MCF 10A (cell line): ENCODE measurements at regions of chr9 and their contacts with region 1.

Region 1: DNA sequence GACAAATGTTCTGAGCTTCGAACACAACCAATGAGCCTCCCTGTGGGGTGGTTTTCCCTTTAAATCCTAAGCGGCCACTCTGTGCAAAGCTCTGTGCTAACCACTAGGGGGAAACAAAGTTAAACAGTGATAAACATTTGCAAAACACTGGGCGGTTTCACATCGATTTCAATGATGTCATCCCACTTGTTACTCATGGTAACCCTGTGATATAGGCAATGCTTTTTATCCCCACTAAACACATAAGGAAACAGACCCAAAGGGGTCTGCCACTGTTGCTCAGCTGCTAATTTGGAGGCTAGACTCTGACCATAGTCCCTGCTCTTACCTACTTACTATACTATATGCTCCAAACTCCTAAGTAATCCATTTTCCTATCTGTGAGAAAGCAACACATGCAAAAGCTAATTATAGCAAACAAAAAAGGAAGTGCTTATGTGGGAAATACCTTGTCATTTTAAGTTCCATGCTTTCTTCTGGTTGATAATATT is 57.3 kb downstream of the PTPN3 start:
- DNase-seq: peak; percentile 85
- H3K4me3 Mint-ChIP-seq: no peak overlapping the region
- H3K27ac Mint-ChIP-seq: peak overlapping the region; percentile 75
- H3K4me1 Mint-ChIP-seq: peaks cover 10% of the 10 kb centered on the region
- H3K27me3 Mint-ChIP-seq: no peaks in the 10 kb centered on the region
- CTCF ChIP-seq: peak; percentile 68

Region 2: GRCh38 chr9:109422641-109423040 is 18.2 kb before region 1 on chr9:
- CTCF ChIA-PET with region 1: interaction called, 13 read pairs
- POLR2A ChIA-PET with region 1: no interaction called
- intact Hi-C with region 1: no loop called
- DNase-seq: no peak
- H3K4me3 Mint-ChIP-seq: no peak overlapping the region
- H3K27ac Mint-ChIP-seq: peak overlapping the region; percentile 49
- H3K4me1 Mint-ChIP-seq: no peaks in the 10 kb centered on the region
- H3K27me3 Mint-ChIP-seq: no peaks in the 10 kb centered on the region
- CTCF ChIP-seq: no peak

Region 3: DNA sequence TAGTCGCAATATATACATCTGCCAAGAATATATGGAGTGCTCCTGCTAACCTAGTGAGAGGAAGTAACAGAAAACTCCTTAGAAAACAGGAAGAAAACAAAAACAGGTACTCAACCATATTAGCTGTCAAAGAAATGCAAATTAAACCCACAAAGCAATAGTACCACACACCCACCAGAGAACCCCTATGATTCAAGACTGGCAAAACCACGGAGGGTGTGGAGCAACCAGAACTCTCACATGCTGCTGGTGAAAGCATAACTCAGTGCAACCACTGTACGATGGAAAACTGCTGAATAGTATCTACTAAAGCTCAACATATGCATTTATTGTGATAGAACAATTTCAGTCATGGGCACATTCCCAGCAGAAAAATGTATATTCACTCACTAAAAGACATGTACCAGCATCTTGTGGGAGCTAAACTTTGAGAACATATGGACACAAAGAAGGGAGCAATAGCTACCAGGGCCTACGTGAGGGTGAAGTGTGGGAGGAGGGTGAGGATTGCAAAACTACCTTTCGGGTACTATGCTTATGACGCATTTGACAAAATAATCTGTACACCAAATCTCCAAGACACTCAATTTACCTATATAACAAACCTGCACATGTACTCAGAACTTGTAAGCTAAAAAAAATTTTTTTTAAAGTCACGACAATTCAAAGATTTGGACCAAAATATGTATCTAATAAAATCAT is 23.2 kb after region 1 on chr9:
- CTCF ChIA-PET with region 1: interaction called, 387 read pairs
- POLR2A ChIA-PET with region 1: interaction called, 344 read pairs
- intact Hi-C with region 1: loop called (anchors 1 kb)
- DNase-seq: peak; percentile 72
- H3K4me3 Mint-ChIP-seq: peak overlapping the region; percentile 36
- H3K27ac Mint-ChIP-seq: peak overlapping the region; percentile 87
- H3K4me1 Mint-ChIP-seq: peaks cover 46% of the 10 kb centered on the region
- H3K27me3 Mint-ChIP-seq: no peaks in the 10 kb centered on the region
- CTCF ChIP-seq: no peak

Region 4: GRCh38 chr9:109475526-109475925 is 34.7 kb after region 1 on chr9:
- CTCF ChIA-PET with region 1: interaction called, 387 read pairs
- POLR2A ChIA-PET with region 1: interaction called, 344 read pairs
- intact Hi-C with region 1: no loop called
- DNase-seq: no peak
- H3K4me3 Mint-ChIP-seq: no peak overlapping the region
- H3K27ac Mint-ChIP-seq: no peak overlapping the region
- H3K4me1 Mint-ChIP-seq: peaks cover 36% of the 10 kb centered on the region
- H3K27me3 Mint-ChIP-seq: no peaks in the 10 kb centered on the region
- CTCF ChIP-seq: no peak

Region 5: GRCh38 chr9:109499631-109500410 is 59.0 kb after region 1 on chr9:
- CTCF ChIA-PET with region 1: interaction called, 16 read pairs
- POLR2A ChIA-PET with region 1: interaction called, 11 read pairs
- intact Hi-C with region 1: no loop called
- DNase-seq: no peak
- H3K4me3 Mint-ChIP-seq: peak overlapping the region; percentile 69
- H3K27ac Mint-ChIP-seq: no peak overlapping the region
- H3K4me1 Mint-ChIP-seq: peaks cover 8% of the 10 kb centered on the region
- H3K27me3 Mint-ChIP-seq: peaks cover 27% of the 10 kb centered on the region
- CTCF ChIP-seq: no peak

Region 6: GRCh38 chr9:109520478-109521132 is 79.8 kb after region 1 on chr9:
- CTCF ChIA-PET with region 1: interaction called, 63 read pairs
- POLR2A ChIA-PET with region 1: interaction called, 9 read pairs
- intact Hi-C with region 1: loop called (anchors 1 kb)
- DNase-seq: peak; percentile 82
- H3K4me3 Mint-ChIP-seq: no peak overlapping the region
- H3K27ac Mint-ChIP-seq: peak overlapping the region; percentile 49
- H3K4me1 Mint-ChIP-seq: peaks cover 10% of the 10 kb centered on the region
- H3K27me3 Mint-ChIP-seq: no peaks in the 10 kb centered on the region
- CTCF ChIP-seq: peak; percentile 85